Posterior cingulate gyrus (tissue), 11 donors: ENCODE measurements at regions of chr22 and their contacts with region 1.

Region 1: DNA sequence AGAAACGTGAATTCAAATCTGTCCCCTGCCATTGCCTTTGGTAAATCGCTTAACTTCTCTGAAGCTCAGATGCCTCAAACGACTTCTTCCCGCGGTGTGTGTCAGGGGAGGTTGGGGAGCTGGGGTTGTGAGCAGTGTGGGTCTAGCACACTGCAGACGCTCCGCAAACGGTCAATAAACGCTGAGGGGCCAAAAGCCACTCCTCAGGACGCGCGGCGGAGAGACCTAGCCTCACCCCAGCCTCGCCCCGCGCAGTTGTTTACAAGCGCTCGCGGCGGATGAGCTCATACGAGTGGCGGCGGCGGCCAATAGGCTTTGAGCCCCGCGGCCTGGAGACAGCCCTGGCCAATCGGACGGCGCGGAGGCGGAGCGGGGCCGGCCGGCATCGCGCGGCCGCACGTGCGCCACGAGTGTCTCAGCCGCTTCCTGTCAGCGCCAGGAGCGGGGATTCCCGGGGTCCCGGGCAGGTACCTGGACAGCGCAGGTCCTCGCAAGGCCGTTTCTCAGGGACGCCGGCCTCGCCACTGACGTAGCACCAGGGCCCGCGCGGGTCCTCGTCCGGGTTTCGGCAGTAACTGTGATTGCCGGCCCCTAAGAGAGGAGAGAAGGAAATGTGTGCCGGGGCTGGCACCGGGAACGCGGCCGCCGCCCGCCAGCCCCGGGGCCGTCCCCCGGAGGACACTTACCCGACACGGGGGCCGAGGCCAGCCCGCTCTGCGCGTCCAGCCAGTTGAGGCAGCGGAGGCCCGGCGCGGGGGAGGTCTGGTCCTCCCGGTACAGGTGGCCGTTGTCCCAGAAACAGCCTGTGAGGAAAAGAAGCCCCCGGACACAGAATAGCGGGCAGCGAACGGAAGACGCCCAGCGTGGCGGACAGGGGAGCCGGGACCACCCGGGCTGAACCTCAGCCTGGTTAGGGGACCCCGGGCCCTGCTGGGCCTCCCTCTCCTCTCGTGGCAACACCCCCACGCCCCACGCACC is 1.5 kb downstream of the PIK3IP1 start:
- DNase-seq: peak; percentile 92 to 99 (median 96)

Region 2: GRCh38 chr22:30968924-30969539 is 321.8 kb before region 1 on chr22 and contains the start of gene TUG1:
- intact Hi-C with region 1: loop called (anchors 5 kb)
- DNase-seq: peak; percentile 97 to 100 (median 98)

Region 3: DNA sequence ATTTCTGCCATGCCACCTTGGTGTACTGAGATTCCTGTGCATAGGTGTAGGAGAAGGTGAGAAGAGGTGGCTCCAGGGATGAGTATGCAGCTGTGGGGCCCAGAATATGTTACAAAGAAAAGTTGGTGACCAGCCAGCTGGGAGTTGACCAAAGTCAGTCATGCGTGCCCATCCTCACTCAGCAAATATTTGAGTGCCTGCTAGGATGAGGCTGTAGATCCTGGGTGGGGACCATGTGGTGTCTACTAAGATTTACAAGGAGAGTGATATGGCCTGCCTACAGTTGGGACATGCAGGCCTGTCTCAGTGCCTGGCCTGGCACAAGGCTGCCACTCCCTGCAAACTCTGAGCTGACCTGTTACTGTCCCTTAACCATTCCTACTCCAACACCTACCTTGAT is 111.4 kb before region 1 on chr22:
- intact Hi-C with region 1: no loop called
- DNase-seq: no peak

Region 4: DNA sequence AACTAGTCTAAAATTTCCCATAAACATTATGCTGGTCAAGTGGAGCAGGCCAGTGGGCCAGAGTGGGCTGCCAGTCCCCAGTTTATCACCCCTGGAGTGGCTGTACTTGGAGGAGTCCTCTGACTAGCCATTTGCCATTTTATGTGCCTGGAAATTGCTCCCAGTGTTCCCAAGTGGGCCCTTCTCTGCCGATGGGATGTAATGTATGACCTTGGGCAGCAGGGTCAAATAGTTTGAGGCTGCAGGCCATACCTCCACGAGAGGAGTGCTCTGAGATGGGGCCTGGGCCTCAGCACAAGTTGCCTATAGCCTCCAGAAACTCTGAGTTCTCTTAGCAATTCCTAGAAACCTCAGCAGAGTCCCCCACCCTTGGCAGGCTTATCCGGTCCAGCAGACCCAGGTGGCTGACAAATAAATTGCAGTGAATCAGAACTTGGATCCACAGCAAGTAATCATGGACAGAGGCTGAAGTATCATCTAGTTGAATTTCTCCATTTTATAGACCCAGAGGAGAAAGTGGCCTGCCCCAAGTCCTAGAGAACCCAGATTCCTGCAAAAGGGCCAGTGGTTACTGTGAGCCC is 73.2 kb after region 1 on chr22:
- intact Hi-C with region 1: no loop called
- DNase-seq: peak in 1 of 10 donors; percentile 37